MCF 10A (cell line): ENCODE measurements at regions of chr5 and their contacts with region 1.

Region 1: GRCh38 chr5:15105796-15106393 is 234.3 kb upstream of the ANKH start:
- DNase-seq: peak; percentile 67
- H3K4me3 Mint-ChIP-seq: no peak overlapping the region
- H3K27ac Mint-ChIP-seq: no peak overlapping the region
- H3K4me1 Mint-ChIP-seq: no peaks in the 10 kb centered on the region
- H3K27me3 Mint-ChIP-seq: no peaks in the 10 kb centered on the region
- CTCF ChIP-seq: peak; percentile 68

Region 2: GRCh38 chr5:15065091-15065490 is 40.8 kb before region 1 on chr5:
- CTCF ChIA-PET with region 1: no interaction called
- POLR2A ChIA-PET with region 1: no interaction called
- intact Hi-C with region 1: no loop called
- DNase-seq: no peak
- H3K4me3 Mint-ChIP-seq: no peak overlapping the region
- H3K27ac Mint-ChIP-seq: no peak overlapping the region
- H3K4me1 Mint-ChIP-seq: no peaks in the 10 kb centered on the region
- H3K27me3 Mint-ChIP-seq: no peaks in the 10 kb centered on the region
- CTCF ChIP-seq: no peak

Region 3: GRCh38 chr5:15116996-15117395 is 11.1 kb after region 1 on chr5:
- CTCF ChIA-PET with region 1: interaction called, 18 read pairs
- POLR2A ChIA-PET with region 1: no interaction called
- intact Hi-C with region 1: no loop called
- DNase-seq: no peak
- H3K4me3 Mint-ChIP-seq: no peak overlapping the region
- H3K27ac Mint-ChIP-seq: no peak overlapping the region
- H3K4me1 Mint-ChIP-seq: no peaks in the 10 kb centered on the region
- H3K27me3 Mint-ChIP-seq: peaks cover 22% of the 10 kb centered on the region
- CTCF ChIP-seq: no peak

Region 4: GRCh38 chr5:15183522-15183921 is 77.6 kb after region 1 on chr5:
- CTCF ChIA-PET with region 1: interaction called, 5 read pairs
- POLR2A ChIA-PET with region 1: no interaction called
- intact Hi-C with region 1: loop called (anchors 1 kb)
- DNase-seq: peak; percentile 13
- H3K4me3 Mint-ChIP-seq: no peak overlapping the region
- H3K27ac Mint-ChIP-seq: no peak overlapping the region
- H3K4me1 Mint-ChIP-seq: no peaks in the 10 kb centered on the region
- H3K27me3 Mint-ChIP-seq: peaks cover 39% of the 10 kb centered on the region
- CTCF ChIP-seq: peak; percentile 6

Region 5: DNA sequence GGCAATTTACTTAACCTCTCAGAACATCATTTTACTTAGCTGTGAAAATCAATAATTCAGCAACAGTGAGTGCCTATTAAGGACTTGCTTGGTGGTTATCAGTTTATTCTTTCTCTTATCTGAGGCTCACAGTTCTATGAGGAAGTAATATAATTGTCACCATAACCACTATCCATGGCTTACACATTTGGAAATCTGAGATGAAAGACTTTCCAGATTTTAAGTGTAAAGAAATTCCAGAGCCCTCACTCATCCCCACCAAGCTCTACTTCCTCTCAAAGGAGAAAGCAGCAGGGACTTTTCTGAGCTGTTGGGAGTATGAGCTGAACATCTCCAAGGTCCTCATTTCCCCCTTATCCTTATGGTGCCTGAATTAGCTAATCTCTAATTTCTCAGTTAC is 715.6 kb after region 1 on chr5:
- CTCF ChIA-PET with region 1: interaction called, 12 read pairs
- POLR2A ChIA-PET with region 1: no interaction called
- intact Hi-C with region 1: loop called (anchors 1 kb)
- DNase-seq: no peak
- H3K4me3 Mint-ChIP-seq: no peak overlapping the region
- H3K27ac Mint-ChIP-seq: no peak overlapping the region
- H3K4me1 Mint-ChIP-seq: no peaks in the 10 kb centered on the region
- H3K27me3 Mint-ChIP-seq: no peaks in the 10 kb centered on the region
- CTCF ChIP-seq: no peak